ENCODE measurements at regions of chr11 and their contacts with region 1.

Region 1: DNA sequence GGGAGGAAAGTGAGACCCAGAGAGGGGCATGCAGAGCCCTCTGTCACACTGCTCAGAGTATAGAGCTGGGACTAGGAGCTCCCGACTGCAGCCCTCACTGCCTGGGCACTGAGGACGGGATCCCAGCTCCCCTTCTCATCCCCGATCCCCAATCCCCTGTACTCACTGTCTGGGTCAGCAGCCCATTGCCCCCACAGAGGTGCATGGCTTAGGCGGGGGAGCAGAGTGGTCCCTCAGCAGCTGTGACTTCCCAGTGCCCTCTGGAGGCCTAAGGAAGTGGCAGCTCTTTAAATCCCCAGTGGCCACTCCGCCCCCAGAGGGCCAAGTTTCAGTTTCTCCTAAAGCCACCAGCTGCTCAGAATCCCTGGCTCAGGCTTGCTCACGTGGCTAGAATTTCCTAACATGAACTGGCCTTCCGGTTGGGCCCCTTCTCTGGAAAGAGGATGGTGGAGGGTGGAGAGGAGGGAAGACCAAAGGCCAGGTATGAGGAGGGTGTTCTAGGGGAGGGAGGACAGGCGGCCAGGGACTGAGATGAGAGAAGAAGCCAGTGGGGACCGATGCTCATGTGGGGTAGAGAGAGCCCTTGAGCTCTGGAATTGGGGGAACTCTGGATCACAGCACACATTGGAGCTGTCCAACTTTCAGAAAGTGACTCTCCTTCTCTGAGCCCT is at the start of gene BATF2:
- DNase-seq: peak; percentile 73
- H3K4me3 ChIP-seq: peak within 1 kb of the TSS in 1 of 3 experiments; percentile 14
- H3K27ac ChIP-seq: no peak within 1 kb of the TSS
- H3K4me1 ChIP-seq: no peaks in the 10 kb centered on the region
- H3K27me3 ChIP-seq: no peaks in the 10 kb centered on the region
- CTCF ChIP-seq: peak; percentile 39 to 65
- POLR2A ChIP-seq: no peak
- total RNA-seq, gene BATF2: 0.75 and 0.81 TPM in 2 replicates

Region 2: DNA sequence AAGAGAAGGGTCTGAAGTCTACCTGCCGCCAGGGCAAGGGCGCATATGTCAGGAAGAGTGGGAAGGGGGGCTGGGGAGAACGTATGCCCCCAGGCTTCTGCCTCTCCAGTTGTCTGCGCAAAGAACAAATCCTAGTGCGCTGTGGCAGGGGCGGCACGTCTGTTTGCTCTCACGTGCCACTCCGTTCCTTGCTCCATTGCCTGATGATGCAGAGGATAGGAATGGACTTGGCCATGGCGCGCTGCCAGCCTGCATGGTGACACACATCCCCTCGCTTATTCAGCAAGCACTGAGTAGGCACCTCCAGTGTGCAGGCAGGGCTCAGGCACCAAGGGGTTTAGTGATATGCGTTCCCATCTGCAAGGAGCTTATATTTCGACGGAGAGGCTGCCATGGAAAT is 451.2 kb before region 1 on chr11:
- CTCF ChIA-PET with region 1: no interaction called
- POLR2A ChIA-PET with region 1: no interaction called
- dilution Hi-C with region 1: no loop called
- intact Hi-C with region 1: no loop called
- DNase-seq: peak; percentile 72
- H3K4me3 ChIP-seq: no peak overlapping the region
- H3K27ac ChIP-seq: no peak overlapping the region
- H3K4me1 ChIP-seq: peaks cover 10% of the 10 kb centered on the region
- H3K27me3 ChIP-seq: no peaks in the 10 kb centered on the region
- CTCF ChIP-seq: no peak
- POLR2A ChIP-seq: no peak

Region 3: DNA sequence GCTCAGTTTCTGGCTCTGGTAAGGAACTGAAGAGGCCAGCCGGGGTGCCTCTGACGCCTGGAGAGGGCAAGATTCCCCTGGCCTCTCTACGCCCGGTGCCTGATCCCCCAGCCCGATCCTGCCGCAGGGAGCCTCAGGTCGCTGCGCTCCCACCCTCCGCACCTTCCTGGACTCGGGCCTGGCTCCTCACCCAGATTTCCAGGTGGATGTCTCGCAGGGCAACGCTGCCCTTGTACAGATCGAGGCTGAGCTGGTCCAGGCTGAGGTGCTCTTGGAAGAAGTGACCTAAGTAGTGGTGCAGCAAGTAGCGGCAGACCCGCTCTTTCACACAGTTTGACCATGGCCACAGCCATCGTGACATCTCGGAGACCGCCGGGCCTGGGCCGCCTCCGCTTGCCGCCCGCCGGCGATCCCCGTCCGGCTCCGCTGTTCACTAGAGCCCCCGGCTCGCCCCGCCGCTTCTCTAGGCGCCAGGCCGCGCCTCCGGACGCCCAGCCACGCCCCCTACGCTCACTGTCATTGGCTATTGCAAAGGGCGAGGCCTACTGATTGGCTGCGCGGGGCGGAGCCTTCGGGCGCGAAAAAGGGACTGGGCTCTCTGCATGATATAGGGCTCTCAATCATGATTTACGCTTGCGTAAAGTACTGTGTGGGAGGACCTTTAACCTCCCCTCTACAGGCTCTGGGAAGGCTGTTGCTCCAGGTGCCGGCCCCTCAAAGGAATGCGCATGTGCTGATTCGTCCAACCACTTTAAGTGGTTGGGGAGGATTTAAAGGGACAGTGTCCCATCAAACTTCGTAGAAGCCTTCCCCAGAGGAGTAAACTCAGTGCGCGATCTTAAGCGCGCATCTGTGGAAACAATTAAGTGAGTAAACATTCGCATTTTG is 79.8 kb before region 1 on chr11 and contains the start of gene ATG2A:
- CTCF ChIA-PET with region 1: interaction called, 34 read pairs
- POLR2A ChIA-PET with region 1: no interaction called
- dilution Hi-C with region 1: no loop called
- intact Hi-C with region 1: loop called (anchors 2 kb)
- DNase-seq: peak; percentile 100
- H3K4me3 ChIP-seq: peak within 1 kb of the TSS; percentile 10 to 86 (median 72)
- H3K27ac ChIP-seq: peak within 1 kb of the TSS; percentile 49
- H3K4me1 ChIP-seq: peaks cover 11% of the 10 kb centered on the region
- H3K27me3 ChIP-seq: no peaks in the 10 kb centered on the region
- CTCF ChIP-seq: no peak
- POLR2A ChIP-seq: peak; percentile 79
- total RNA-seq, gene ATG2A: 24.3 and 27.4 TPM in 2 replicates

Region 4: DNA sequence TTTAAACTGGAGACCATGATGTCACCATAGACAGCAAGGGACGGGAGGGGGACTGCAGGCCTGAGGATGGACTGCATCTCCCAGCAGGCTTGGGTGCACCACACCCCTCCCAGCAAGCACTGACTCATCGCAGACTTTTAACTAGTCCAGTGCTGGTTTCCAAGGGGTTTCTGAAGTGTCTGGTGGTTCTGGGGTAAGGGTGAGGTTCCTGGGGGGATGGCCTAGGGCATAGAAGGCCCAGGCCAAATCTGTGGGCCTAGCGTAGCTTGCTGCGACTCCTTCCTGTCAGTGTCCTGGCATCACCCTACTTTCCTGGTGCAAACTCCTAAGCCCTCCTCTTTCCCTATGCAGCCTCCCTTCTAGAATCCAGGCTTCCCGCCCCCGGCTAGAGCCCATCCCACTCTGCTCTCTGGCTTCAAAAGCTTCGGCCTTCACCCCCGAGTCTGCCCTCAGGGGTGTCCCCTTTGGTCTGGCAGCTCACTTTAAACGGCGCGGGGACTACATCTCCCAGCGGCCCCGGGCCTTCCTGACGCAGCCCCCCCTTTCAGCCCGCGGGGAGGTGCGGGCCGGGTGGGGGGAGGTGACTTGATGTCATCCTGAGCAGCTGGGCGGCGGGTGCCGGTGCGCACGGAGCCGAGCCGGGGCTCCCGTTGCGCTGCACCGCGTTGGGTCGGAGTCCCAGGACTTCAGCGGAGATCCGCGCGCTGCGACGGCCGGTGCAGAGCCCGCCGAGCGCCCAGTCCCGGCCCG is 72.6 kb before region 1 on chr11 and contains the start of gene PPP2R5B:
- CTCF ChIA-PET with region 1: interaction called, 34 read pairs
- POLR2A ChIA-PET with region 1: no interaction called
- dilution Hi-C with region 1: no loop called
- intact Hi-C with region 1: loop called (anchors 2 kb)
- DNase-seq: peak; percentile 91
- H3K4me3 ChIP-seq: peak within 1 kb of the TSS; percentile 40 to 88 (median 81)
- H3K27ac ChIP-seq: peak within 1 kb of the TSS; percentile 69
- H3K4me1 ChIP-seq: peaks cover 7% of the 10 kb centered on the region
- H3K27me3 ChIP-seq: no peaks in the 10 kb centered on the region
- CTCF ChIP-seq: no peak
- POLR2A ChIP-seq: peak; percentile 26
- total RNA-seq, gene PPP2R5B: 17.8 and 21.5 TPM in 2 replicates

Region 5: GRCh38 chr11:64935359-64936081 is 61.3 kb before region 1 on chr11 and contains the start of gene GPHA2:
- CTCF ChIA-PET with region 1: interaction called, 14 read pairs
- POLR2A ChIA-PET with region 1: no interaction called
- dilution Hi-C with region 1: no loop called
- intact Hi-C with region 1: no loop called
- DNase-seq: no peak
- H3K4me3 ChIP-seq: no peak within 1 kb of the TSS
- H3K27ac ChIP-seq: no peak within 1 kb of the TSS
- H3K4me1 ChIP-seq: no peaks in the 10 kb centered on the region
- H3K27me3 ChIP-seq: no peaks in the 10 kb centered on the region
- CTCF ChIP-seq: no peak
- POLR2A ChIP-seq: no peak
- total RNA-seq, gene GPHA2: not detected in 2 replicates

Region 6: GRCh38 chr11:64947208-64947814 is 49.5 kb before region 1 on chr11:
- CTCF ChIA-PET with region 1: interaction called, 14 read pairs
- POLR2A ChIA-PET with region 1: no interaction called
- dilution Hi-C with region 1: no loop called
- intact Hi-C with region 1: no loop called
- DNase-seq: peak; percentile 25
- H3K4me3 ChIP-seq: no peak overlapping the region
- H3K27ac ChIP-seq: no peak overlapping the region
- H3K4me1 ChIP-seq: no peaks in the 10 kb centered on the region
- H3K27me3 ChIP-seq: peaks cover 24 to 34% of the 10 kb centered on the region in 2 experiments
- CTCF ChIP-seq: peak in 1 of 2 donors; percentile 18
- POLR2A ChIP-seq: no peak

Region 7: DNA sequence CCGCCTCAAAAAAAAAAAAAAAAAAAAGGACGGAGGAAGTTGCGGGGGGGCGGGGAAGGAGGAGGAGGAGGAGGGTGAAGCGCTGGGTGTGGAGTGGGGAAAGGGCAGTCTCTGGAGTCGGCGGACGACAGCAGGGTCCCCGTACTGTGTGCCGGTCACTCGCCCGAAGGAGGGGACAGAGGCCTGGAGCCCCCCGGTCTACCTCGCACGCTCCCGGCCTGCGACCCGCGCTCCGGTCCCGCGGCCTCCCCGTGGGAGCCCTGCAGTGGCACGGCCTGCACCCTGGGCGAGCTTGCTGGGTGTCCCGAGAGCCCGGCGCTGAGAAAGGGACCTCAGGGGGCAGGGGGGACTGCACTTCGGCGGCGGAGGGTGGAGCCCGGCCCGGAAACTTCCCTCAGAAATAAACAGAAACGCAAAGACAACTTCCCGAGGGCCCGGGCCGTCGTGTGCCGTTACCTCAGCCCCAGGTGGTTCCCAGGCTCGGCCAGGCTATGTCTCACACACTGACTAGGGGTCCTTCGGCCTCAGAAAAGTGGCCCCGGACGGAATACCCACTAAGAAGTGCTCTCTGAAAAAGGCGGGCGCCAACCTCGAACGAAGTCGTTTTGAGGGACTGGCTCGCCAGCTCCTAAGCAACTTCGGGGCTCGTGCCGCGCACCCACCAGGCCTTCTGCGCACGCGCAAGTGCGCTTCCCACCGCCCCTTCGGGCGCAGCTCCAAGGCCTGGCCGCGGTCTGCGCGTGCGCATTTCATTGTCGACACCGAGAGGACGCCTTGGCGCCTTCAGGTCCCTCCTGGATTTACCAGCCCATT is 25.2 kb before region 1 on chr11 and contains the start of gene MAJIN:
- CTCF ChIA-PET with region 1: interaction called, 10 read pairs
- POLR2A ChIA-PET with region 1: no interaction called
- dilution Hi-C with region 1: no loop called
- intact Hi-C with region 1: no loop called
- DNase-seq: peak; percentile 90
- H3K4me3 ChIP-seq: peak within 1 kb of the TSS in 2 of 3 experiments; percentile 8 to 19
- H3K27ac ChIP-seq: no peak within 1 kb of the TSS
- H3K4me1 ChIP-seq: peaks cover 15% of the 10 kb centered on the region
- H3K27me3 ChIP-seq: no peaks in the 10 kb centered on the region
- CTCF ChIP-seq: no peak
- POLR2A ChIP-seq: no peak
- total RNA-seq, gene MAJIN: not detected in 2 replicates